Activated CD8-positive, alpha-beta T cell treated with anti-CD3 and anti-CD28 coated beads, Interleukin-2, amount 10 ng/mL, durations not matched to agents 7 days and 5 days (primary cell): ENCODE measurements at regions of chr18 and their contacts with region 1.

Region 1: GRCh38 chr18:67199993-67200617 is 316.4 kb downstream of the DSEL start:
- DNase-seq: no peak
- ATAC-seq: peak; percentile 75
- H3K4me3 Mint-ChIP-seq: no peak overlapping the region
- H3K27ac Mint-ChIP-seq: no peak overlapping the region
- H3K4me1 Mint-ChIP-seq: no peaks in the 10 kb centered on the region
- H3K27me3 Mint-ChIP-seq: no peaks in the 10 kb centered on the region

Region 2: GRCh38 chr18:67104700-67105284 is 95.3 kb before region 1 on chr18:
- CTCF ChIA-PET with region 1: interaction called, 13 read pairs
- POLR2A ChIA-PET with region 1: no interaction called
- DNase-seq: peak; percentile 55
- ATAC-seq: peak; percentile 61
- H3K4me3 Mint-ChIP-seq: no peak overlapping the region
- H3K27ac Mint-ChIP-seq: no peak overlapping the region
- H3K4me1 Mint-ChIP-seq: no peaks in the 10 kb centered on the region
- H3K27me3 Mint-ChIP-seq: no peaks in the 10 kb centered on the region

Region 3: GRCh38 chr18:67132919-67133318 is 67.2 kb before region 1 on chr18:
- CTCF ChIA-PET with region 1: no interaction called
- POLR2A ChIA-PET with region 1: no interaction called
- DNase-seq: no peak
- ATAC-seq: no peak
- H3K4me3 Mint-ChIP-seq: no peak overlapping the region
- H3K27ac Mint-ChIP-seq: no peak overlapping the region
- H3K4me1 Mint-ChIP-seq: no peaks in the 10 kb centered on the region
- H3K27me3 Mint-ChIP-seq: no peaks in the 10 kb centered on the region

Region 4: GRCh38 chr18:67545681-67546080 is 345.6 kb after region 1 on chr18:
- CTCF ChIA-PET with region 1: no interaction called
- POLR2A ChIA-PET with region 1: no interaction called
- DNase-seq: no peak
- ATAC-seq: no peak
- H3K4me3 Mint-ChIP-seq: no peak overlapping the region
- H3K27ac Mint-ChIP-seq: no peak overlapping the region
- H3K4me1 Mint-ChIP-seq: no peaks in the 10 kb centered on the region
- H3K27me3 Mint-ChIP-seq: no peaks in the 10 kb centered on the region